ENCODE measurements at regions of chr1 and their contacts with region 1.

Region 1: DNA sequence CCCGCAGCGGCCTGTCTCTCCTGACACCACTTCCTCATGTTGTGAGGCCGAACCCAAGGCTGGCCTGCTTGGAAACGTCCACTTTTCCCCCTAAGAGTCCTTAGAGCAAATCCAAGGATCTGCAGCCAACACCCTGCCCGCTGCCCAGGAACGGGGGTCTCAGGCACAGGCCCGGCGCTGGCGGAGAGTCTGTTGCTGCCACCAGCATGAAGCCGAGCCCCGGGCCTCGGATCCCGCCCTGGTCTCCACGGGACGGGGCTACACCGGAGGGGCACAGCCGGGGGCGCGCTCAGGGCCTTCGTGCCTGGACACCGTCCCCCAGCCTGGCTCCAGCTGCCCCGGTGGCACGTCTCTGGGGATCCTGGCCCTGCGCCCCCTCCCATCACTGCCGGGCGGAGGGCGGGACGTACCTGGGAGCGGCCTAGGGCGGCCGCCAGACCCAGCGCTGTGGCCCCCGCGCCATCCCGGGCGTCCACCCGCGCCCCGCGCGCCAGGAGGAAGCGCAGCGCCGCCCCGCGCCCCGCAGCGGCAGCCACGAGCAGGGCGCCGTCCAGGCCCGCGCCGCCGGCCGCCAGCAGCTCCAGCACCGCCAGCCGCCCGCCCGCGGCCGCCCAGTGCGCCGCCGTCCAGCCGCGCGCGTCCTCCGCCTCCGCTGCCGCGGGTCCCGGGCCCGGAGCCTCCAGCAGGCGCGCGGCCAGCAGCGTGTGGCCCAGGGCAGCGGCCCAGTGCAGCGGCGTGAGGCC is 1.3 kb downstream of the ANKRD65 start:
- DNase-seq: no peak
- H3K4me3 ChIP-seq: no peak overlapping the region
- H3K27ac ChIP-seq: no peak overlapping the region
- H3K4me1 ChIP-seq: no peaks in the 10 kb centered on the region
- H3K27me3 ChIP-seq: no peaks in the 10 kb centered on the region
- CTCF ChIP-seq: no peak

Region 2: GRCh38 chr1:1455366-1455884 is 35.6 kb after region 1 on chr1:
- CTCF ChIA-PET with region 1: no interaction called
- POLR2A ChIA-PET with region 1: no interaction called
- intact Hi-C with region 1: loop called (anchors 5 kb)
- DNase-seq: no peak
- H3K4me3 ChIP-seq: no peak overlapping the region
- H3K27ac ChIP-seq: no peak overlapping the region
- H3K4me1 ChIP-seq: no peaks in the 10 kb centered on the region
- H3K27me3 ChIP-seq: no peaks in the 10 kb centered on the region
- CTCF ChIP-seq: no peak

Region 3: DNA sequence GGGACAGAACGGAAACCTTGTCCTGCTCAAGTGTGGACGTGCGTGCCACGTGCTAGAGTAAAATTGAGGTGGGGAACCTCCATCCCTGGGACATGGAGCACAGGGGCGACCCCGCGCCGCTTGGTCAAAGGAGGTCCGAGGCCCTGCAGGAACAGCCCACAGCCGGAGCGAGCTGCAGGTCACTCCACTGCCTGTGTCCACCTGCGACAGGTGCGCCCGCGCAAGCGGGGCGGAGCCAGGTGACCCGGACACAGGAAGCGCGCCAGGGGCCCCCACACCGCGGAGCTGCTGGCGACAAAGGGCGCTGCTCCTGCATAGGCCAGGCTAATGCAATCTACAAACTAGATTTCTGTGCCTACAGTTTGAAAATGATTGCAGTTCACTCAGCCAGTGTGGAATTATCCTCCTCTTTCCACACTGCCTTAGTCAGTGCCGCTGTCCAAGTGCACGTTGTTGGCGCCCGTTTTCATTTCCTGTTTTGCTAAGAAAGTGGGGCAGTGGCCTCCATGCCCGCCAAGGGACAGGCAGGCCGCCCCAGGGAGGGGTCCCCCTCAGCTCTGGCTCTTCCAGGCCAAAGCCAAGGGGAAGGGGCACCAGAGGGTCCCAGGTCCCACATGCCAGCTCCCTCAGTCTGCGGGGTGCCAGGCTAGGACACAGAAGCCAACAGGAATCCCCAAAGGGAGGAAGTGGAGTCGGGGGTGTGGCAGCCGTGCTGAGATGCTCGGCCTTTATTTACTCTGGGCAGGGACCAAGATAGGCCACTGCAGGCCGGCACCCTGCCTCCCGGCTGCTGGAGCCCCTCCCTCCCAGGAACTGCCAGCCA is 362.8 kb after region 1 on chr1:
- CTCF ChIA-PET with region 1: no interaction called
- POLR2A ChIA-PET with region 1: no interaction called
- intact Hi-C with region 1: no loop called
- DNase-seq: no peak
- H3K4me3 ChIP-seq: no peak overlapping the region
- H3K27ac ChIP-seq: peak overlapping the region; percentile 50
- H3K4me1 ChIP-seq: peaks cover 25% of the 10 kb centered on the region
- H3K27me3 ChIP-seq: no peaks in the 10 kb centered on the region
- CTCF ChIP-seq: no peak

Measured in A673 (cell line).